ENCODE measurements at regions of chr7 and their contacts with region 1.

Region 1: GRCh38 chr7:1473864-1474512 is 14.7 kb upstream of the MICALL2 start:
- DNase-seq: peak; percentile 77 to 88
- ATAC-seq: peak; percentile 59 to 79
- H3K4me3 ChIP-seq: no peak overlapping the region
- H3K27ac ChIP-seq: peak overlapping the region in 1 of 2 experiments; percentile 76; a peak in 3 of 6 replicates
- H3K4me1 ChIP-seq: peaks cover 3% of the 10 kb centered on the region; the same call in 1 of the 3 replicates
- CTCF ChIP-seq: peak; percentile 73
- EP300 ChIP-seq: no peak
- POLR2A ChIP-seq: no peak
- RAD21 ChIP-seq: peak; percentile 74 to 76

Region 2: DNA sequence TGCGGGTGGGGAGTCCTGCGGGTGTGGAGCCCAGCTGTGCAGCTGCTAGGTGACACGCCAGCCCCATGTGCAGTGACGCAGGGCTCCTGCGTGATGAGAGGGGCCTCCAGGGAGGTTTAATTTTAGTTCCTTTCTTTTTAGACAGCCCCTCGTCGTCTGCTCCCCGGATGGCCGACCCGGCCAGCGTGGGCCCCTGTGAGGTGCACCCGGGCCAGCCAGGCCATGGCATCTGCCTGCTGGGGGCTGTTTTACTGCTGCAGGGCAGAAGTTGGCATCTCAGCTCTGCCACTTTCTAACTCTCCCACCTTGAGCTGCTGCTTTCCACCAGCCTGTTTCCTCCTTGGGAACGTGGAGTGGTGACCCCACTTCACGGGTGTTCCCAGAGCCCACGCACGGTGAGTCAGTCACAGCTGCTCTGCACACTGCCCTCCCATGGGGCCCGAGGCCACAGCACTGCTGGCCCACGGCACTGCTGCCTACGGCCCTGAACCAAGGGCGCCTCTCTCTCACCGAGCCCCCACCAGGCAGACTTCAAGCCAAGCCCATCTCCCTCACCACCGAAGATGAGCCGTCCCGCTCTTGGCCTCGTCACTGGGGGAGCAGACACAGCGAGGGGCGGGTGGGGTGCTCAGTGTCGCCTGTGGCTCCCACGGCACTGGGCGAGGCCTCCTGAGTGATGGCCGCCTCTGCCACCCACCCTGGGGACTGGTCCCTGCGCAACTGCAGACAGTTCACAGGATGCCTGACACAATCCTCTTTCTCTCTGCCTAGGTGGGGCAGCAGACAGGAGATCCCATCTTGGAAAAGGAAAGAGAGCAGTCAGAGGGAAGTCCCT is 469.8 kb before region 1 on chr7:
- CTCF ChIA-PET with region 1: no interaction called
- POLR2A ChIA-PET with region 1: no interaction called
- DNase-seq: no peak
- ATAC-seq: peak in 1 of 2 experiments; percentile 16; a peak in 1 of 6 replicates
- H3K4me3 ChIP-seq: no peak overlapping the region
- H3K27ac ChIP-seq: no peak overlapping the region
- H3K4me1 ChIP-seq: no peaks in the 10 kb centered on the region
- CTCF ChIP-seq: no peak
- EP300 ChIP-seq: no peak
- POLR2A ChIP-seq: no peak
- RAD21 ChIP-seq: no peak

Region 3: DNA sequence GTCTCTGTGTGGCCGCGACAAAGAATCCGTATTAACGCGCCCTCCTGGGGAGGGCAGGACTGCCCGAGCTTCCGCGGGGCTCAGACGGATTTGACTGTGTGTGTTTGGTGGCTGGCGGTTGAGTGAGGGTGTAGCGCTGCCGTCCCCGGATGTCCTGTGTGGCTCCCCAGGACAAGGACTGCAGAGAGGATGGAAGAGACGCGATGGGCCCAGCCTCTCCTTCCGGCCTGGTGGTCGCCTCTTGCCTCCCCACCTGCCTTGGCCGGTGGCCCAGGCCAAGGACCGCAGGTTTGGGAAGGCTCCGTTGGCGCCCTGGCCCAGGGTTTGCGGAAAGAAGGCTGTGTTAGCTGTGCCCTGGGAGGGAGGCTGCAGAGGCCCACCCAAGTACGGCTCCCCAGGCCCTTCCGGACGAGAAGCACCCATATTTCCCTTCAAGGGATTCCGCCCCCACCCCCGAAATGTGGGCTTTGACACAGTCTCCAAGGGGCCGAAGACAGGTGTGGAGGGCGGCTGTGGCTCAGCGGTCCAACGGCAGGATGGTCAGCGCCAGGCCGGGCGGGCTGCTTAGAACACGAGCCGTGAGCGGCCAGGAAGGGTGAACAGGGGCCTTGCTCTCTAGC is 239.0 kb before region 1 on chr7:
- CTCF ChIA-PET with region 1: interaction called, 10 read pairs
- POLR2A ChIA-PET with region 1: no interaction called
- DNase-seq: peak in 1 of 2 experiments; percentile 36
- ATAC-seq: peak in 1 of 2 experiments; percentile 52; a peak in 3 of 6 replicates
- H3K4me3 ChIP-seq: 0 out of 3 replicates have a peak overlapping the region, but pooled peaks have one; percentile 38
- H3K27ac ChIP-seq: no peak overlapping the region
- H3K4me1 ChIP-seq: peaks cover 26% of the 10 kb centered on the region
- CTCF ChIP-seq: no peak
- EP300 ChIP-seq: no peak
- POLR2A ChIP-seq: no peak
- RAD21 ChIP-seq: no peak

Region 4: GRCh38 chr7:1432411-1433082 is 41.4 kb before region 1 on chr7:
- CTCF ChIA-PET with region 1: interaction called, 23 read pairs
- POLR2A ChIA-PET with region 1: no interaction called
- DNase-seq: peak; percentile 60 to 66
- ATAC-seq: peak; percentile 61 to 84
- H3K4me3 ChIP-seq: no peak overlapping the region
- H3K27ac ChIP-seq: no peak overlapping the region
- H3K4me1 ChIP-seq: peaks cover 4% of the 10 kb centered on the region; the same call in 2 of the 3 replicates
- CTCF ChIP-seq: peak; percentile 81
- EP300 ChIP-seq: no peak
- POLR2A ChIP-seq: no peak
- RAD21 ChIP-seq: peak; percentile 68 to 76

Region 5: GRCh38 chr7:1459522-1459892 is 14.5 kb before region 1 on chr7:
- CTCF ChIA-PET with region 1: interaction called, 209 read pairs
- POLR2A ChIA-PET with region 1: no interaction called
- DNase-seq: peak; percentile 99
- ATAC-seq: peak; percentile 67 to 88
- H3K4me3 ChIP-seq: peak overlapping the region; percentile 96
- H3K27ac ChIP-seq: peak overlapping the region in 1 of 2 experiments; percentile 88; a peak in 3 of 6 replicates
- H3K4me1 ChIP-seq: peaks cover 65% of the 10 kb centered on the region
- CTCF ChIP-seq: no peak
- EP300 ChIP-seq: no peak
- POLR2A ChIP-seq: no peak
- RAD21 ChIP-seq: no peak

Region 6: DNA sequence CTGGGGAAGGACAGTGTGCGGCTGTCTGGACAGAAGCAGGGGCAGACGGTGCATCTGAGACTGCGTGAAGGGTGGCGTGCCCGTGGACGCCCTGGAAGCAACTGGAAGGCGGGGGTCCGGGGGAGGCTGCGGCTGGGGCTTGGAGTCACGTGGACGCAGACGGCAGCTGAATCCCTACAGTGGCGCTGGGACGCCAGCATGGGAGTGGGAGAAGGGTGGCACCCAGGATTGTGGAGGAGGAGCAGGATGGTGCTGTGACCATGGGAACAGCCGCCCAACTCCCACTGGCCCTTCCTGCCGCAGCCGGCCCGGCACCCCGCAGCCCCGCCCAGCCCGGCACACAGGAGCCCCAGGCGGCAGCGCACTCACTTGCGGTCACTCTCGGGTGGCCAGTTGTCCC is 20.5 kb after region 1 on chr7:
- CTCF ChIA-PET with region 1: interaction called, 103 read pairs
- POLR2A ChIA-PET with region 1: no interaction called
- DNase-seq: no peak
- ATAC-seq: peak in 1 of 2 experiments; percentile 12; a peak in 3 of 6 replicates
- H3K4me3 ChIP-seq: no peak overlapping the region
- H3K27ac ChIP-seq: no peak overlapping the region
- H3K4me1 ChIP-seq: no peaks in the 10 kb centered on the region
- CTCF ChIP-seq: no peak
- EP300 ChIP-seq: no peak
- POLR2A ChIP-seq: no peak
- RAD21 ChIP-seq: no peak